ENCODE measurements at regions of chr10 and their contacts with region 1.

Region 1: DNA sequence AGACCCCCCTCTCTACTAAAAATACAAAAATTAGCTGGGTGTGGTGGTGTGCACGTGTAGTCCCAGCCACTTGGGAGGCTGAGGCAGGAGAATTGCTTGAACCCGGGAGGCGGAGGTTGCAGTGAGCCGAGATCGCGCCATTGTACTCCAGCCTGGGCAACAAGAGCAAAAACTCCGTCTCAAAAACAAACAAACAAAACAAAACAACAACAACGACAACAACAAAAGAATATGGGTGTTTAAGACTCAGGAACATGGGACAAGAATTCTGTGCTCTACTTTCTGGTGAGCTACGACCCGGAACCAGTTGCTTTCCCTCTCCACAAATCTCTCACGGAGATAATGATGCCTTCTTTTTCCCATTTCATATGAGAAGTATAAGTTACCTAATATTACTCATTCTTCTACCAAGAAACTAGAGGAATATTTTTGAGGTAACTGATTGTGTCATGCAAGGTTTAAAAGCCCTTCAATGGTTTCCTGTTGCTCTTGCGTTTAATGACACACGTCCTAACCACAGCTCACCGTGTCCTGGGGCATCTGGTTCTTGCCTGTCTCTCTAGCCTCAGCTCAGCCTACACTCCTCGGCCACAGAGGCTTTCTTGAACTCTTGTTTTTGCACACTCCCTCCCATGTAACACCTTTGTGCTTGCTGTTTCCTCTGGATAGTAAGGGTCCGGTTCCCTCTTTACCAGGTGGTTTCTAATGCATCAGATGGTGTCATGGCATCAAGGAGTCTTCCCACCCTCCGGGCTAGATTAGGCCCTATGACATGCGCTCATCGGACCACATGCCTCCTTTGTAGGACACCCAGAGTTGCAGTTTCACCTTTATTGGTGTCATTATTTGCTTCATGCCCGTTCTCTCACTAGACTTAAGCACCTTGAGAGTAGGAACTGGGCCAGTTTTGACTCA is 67.5 kb downstream of the PFKFB3 start:
- DNase-seq: peak; percentile 90
- ATAC-seq: peak; percentile 72
- H3K4me3 Mint-ChIP-seq: peak overlapping the region; percentile 25
- H3K27ac Mint-ChIP-seq: peak overlapping the region; percentile 92
- H3K4me1 Mint-ChIP-seq: peaks cover 73% of the 10 kb centered on the region
- H3K27me3 Mint-ChIP-seq: no peaks in the 10 kb centered on the region

Region 2: DNA sequence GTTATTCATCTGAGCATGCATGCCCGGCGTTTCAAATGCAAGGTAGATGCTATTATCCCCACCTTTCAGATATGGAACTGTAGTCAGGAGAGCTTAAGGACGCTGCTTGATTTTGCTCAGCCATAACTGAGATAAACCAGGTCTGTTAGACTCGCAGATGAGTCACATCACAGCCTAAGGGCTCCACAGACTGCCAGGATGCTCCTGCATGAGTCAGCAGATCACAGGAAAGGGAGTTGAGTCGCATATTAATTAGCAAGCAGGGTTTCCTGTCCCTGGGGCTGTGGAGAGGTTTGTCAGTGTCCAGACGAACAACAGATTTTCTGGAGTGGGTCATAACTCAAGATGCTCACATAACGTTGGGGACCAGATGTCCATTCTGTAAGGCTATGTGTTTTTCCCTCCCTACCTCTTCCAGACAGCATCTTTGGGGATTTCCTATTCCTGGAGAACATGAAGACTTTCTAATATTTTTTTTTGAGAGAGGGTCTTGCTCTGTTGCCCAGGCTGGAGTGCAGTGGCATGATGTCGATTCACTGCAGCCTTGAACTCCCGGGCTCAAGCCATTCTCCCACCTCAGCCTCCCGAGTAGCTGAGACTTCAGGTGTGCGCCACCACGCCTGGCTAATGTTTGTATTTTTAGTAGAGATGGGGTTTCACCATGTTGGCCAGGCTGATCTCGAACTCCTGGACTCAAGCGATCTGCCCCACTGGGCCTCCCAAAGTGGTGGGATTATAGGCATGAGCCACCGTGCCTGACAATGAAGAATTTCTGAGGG is 30.8 kb before region 1 on chr10:
- CTCF ChIA-PET with region 1: interaction called, 4 read pairs
- POLR2A ChIA-PET with region 1: interaction called, 5 read pairs
- intact Hi-C with region 1: loop called in 1 of 2 experiments (anchors 1 kb)
- DNase-seq: peak; percentile 84
- ATAC-seq: peak; percentile 92
- H3K4me3 Mint-ChIP-seq: no peak overlapping the region
- H3K27ac Mint-ChIP-seq: peak overlapping the region; percentile 45
- H3K4me1 Mint-ChIP-seq: peaks cover 23% of the 10 kb centered on the region
- H3K27me3 Mint-ChIP-seq: no peaks in the 10 kb centered on the region

Region 3: DNA sequence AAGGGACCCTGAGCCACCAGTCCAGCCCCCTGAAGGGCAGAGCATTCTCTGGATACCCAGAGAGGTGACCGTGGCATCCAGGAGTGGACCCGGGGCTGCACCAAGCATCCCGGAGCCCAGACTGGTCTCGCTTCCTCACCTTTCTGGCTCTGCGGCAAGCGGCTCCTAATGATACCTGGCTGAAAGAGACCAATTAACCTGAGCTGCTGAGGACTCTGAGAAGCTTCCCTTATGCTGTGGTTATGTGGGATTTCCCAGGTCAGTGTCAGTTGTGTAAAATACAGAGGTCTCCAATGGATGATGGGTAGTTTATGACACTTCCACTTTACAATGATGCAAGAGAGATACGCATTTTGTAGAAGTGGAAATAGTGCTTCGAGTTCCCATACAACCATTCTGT is 16.0 kb before region 1 on chr10:
- CTCF ChIA-PET with region 1: no interaction called
- POLR2A ChIA-PET with region 1: no interaction called
- intact Hi-C with region 1: no loop called
- DNase-seq: no peak
- ATAC-seq: peak; percentile 49
- H3K4me3 Mint-ChIP-seq: no peak overlapping the region
- H3K27ac Mint-ChIP-seq: peak overlapping the region; percentile 25
- H3K4me1 Mint-ChIP-seq: peaks cover 5% of the 10 kb centered on the region
- H3K27me3 Mint-ChIP-seq: no peaks in the 10 kb centered on the region

Region 4: GRCh38 chr10:6300106-6300783 is 30.0 kb after region 1 on chr10:
- CTCF ChIA-PET with region 1: interaction called, 4 read pairs
- POLR2A ChIA-PET with region 1: interaction called, 5 read pairs
- intact Hi-C with region 1: loop called in 1 of 2 experiments (anchors 1 kb)
- DNase-seq: peak; percentile 65
- ATAC-seq: peak; percentile 68
- H3K4me3 Mint-ChIP-seq: peak overlapping the region; percentile 30
- H3K27ac Mint-ChIP-seq: peak overlapping the region; percentile 80
- H3K4me1 Mint-ChIP-seq: peaks cover 59% of the 10 kb centered on the region
- H3K27me3 Mint-ChIP-seq: no peaks in the 10 kb centered on the region

Region 5: DNA sequence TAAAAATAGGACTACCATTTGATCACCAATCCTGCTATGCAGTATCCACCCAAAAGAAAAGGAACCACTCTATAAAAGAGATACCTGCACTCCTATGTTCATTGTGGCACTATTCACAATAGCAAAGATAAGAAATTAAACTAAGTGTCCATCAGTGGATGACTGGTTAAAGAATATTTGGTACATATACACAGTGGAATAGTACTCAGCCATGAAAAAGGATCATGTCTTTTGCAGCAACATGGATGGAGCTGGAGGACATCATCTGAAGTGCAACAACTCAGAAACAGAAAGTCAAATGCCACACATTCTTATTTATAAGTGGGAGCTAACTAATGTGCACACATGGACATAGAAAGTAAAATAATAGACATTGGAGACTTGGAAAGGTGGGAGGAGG is 48.9 kb after region 1 on chr10:
- CTCF ChIA-PET with region 1: no interaction called
- POLR2A ChIA-PET with region 1: no interaction called
- intact Hi-C with region 1: no loop called
- DNase-seq: no peak
- ATAC-seq: no peak
- H3K4me3 Mint-ChIP-seq: no peak overlapping the region
- H3K27ac Mint-ChIP-seq: no peak overlapping the region
- H3K4me1 Mint-ChIP-seq: no peaks in the 10 kb centered on the region
- H3K27me3 Mint-ChIP-seq: no peaks in the 10 kb centered on the region